ENCODE measurements at regions of chr11 and their contacts with region 1.

Region 1: DNA sequence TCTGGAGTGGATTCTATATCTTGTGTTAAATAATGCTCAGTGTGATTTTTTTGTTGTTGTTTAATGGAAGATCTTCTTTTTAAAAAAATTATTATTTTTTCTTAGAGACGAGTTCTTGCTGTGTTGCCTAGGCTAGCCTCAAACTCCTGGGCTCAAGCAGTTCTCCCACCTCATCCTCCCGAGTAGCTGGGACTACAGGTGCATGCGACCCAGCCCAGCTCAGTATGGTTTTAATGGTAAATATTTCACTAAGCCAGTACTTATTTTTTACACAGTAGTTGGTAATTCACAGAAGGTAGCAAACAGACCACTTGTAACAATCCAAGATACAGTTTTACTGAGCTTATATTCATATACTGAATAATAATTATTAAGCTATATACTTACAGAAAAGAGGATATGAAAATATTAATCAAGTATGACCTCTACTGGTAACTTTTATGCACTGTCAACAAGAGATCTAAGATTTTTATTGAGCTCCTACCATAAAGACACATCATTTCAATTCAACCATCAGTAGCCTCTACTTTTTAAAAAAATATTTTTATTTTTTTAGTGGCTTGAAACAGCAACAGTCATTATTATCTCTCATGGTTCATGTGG is 6.1 kb upstream of the CD59 start:
- DNase-seq: no peak
- ATAC-seq: peak; percentile 63
- H3K4me3 ChIP-seq: no peak overlapping the region
- H3K27ac ChIP-seq: no peak overlapping the region
- H3K4me1 ChIP-seq: peaks cover 0 to 4% of the 10 kb centered on the region in 2 experiments; a peak in 2 of 4 replicates
- H3K27me3 ChIP-seq: no peaks in the 10 kb centered on the region
- CTCF ChIP-seq: peak; percentile 26 to 56 (median 42); a peak in 3 of 6 replicates
- POLR2A ChIP-seq: no peak
- RAD21 ChIP-seq: peak; percentile 70; the same call in 1 of the 2 replicates

Region 2: GRCh38 chr11:33161120-33162005 is 581.0 kb before region 1 on chr11 and contains the start of gene CSTF3:
- CTCF ChIA-PET with region 1: interaction called, 14 read pairs
- POLR2A ChIA-PET with region 1: no interaction called
- RAD21 ChIA-PET with region 1: no interaction called
- intact Hi-C with region 1: no loop called
- DNase-seq: peak; percentile 97
- ATAC-seq: peak; percentile 97
- H3K4me3 ChIP-seq: peak within 1 kb of the TSS; percentile 70 to 85
- H3K27ac ChIP-seq: peak within 1 kb of the TSS; percentile 76
- H3K4me1 ChIP-seq: peaks cover 6 to 27% of the 10 kb centered on the region in 2 experiments; a peak in 3 of 4 replicates
- H3K27me3 ChIP-seq: no peaks in the 10 kb centered on the region
- CTCF ChIP-seq: peak in 2 of 3 experiments; percentile 11 to 20; a peak in 1 of 6 replicates
- POLR2A ChIP-seq: peak; percentile 45
- RAD21 ChIP-seq: no peak
- total RNA-seq, gene CSTF3: 39.3 TPM

Region 3: GRCh38 chr11:33542921-33543320 is 199.4 kb before region 1 on chr11:
- CTCF ChIA-PET with region 1: interaction called, 11 read pairs
- POLR2A ChIA-PET with region 1: no interaction called
- RAD21 ChIA-PET with region 1: interaction called in 1 of 2 experiments, 3 read pairs
- intact Hi-C with region 1: loop called (anchors 5 kb)
- DNase-seq: peak; percentile 22
- ATAC-seq: peak; percentile 94
- H3K4me3 ChIP-seq: no peak overlapping the region
- H3K27ac ChIP-seq: no peak overlapping the region
- H3K4me1 ChIP-seq: peaks cover 0 to 5% of the 10 kb centered on the region in 2 experiments; a peak in 1 of 4 replicates
- H3K27me3 ChIP-seq: no peaks in the 10 kb centered on the region
- CTCF ChIP-seq: peak; percentile 67 to 87 (median 80); a peak in 5 of 6 replicates
- POLR2A ChIP-seq: no peak
- RAD21 ChIP-seq: peak; percentile 76

Region 4: DNA sequence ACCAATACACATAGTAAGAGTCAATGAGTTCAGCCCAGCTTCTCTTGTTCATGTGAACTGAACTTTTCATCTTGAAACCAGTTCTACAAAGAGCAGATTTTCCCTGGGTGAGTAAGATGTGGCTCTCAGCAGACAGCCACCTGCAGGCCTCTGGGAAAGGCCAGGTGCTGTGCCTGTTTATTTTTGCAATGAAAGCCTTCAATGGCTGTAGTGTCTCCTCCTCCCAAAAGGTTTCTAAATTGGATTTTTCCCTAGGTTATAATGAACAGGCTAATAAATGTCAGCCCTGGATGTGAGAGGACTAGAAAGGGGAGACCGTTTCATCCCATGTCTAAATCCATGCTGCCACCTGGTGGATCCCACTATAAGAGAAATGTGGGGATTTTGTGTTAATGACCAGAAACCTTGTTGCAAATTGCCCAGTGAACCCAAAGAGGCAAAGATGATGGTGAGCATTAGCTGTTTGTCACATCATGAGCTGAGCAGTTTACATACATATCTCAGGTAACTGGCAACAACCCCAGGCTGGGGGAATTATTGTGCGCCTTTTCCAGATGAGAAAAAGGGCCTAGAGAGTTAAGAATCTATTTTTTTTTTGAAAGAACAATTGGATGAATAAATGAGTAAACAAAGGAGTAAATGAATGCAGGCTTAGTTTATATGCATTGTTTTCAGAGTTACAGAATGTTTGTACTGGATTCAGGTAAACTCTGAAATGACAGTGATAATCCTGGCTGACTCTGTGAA is 54.4 kb before region 1 on chr11:
- CTCF ChIA-PET with region 1: interaction called, 57 read pairs
- POLR2A ChIA-PET with region 1: interaction called, 7 read pairs
- RAD21 ChIA-PET with region 1: interaction called in 1 of 2 experiments, 11 read pairs
- intact Hi-C with region 1: no loop called
- DNase-seq: peak; percentile 60
- ATAC-seq: peak; percentile 43
- H3K4me3 ChIP-seq: no peak overlapping the region
- H3K27ac ChIP-seq: no peak overlapping the region
- H3K4me1 ChIP-seq: peaks cover 29 to 56% of the 10 kb centered on the region in 2 experiments
- H3K27me3 ChIP-seq: no peaks in the 10 kb centered on the region
- CTCF ChIP-seq: peak; percentile 70 to 90 (median 88); a peak in 5 of 6 replicates
- POLR2A ChIP-seq: no peak
- RAD21 ChIP-seq: peak; percentile 98

Region 5: GRCh38 chr11:33700425-33701271 is 41.7 kb before region 1 on chr11 and contains the start of gene C11orf91:
- CTCF ChIA-PET with region 1: interaction called, 16 read pairs
- POLR2A ChIA-PET with region 1: interaction called, 11 read pairs
- RAD21 ChIA-PET with region 1: interaction called in 1 of 2 experiments, 3 read pairs
- intact Hi-C with region 1: loop called (anchors 5 kb)
- DNase-seq: peak; percentile 76
- ATAC-seq: peak; percentile 93
- H3K4me3 ChIP-seq: peak within 1 kb of the TSS; percentile 44 to 52
- H3K27ac ChIP-seq: peak within 1 kb of the TSS; percentile 23; the same call in 1 of the 2 replicates
- H3K4me1 ChIP-seq: peaks cover 10 to 71% of the 10 kb centered on the region in 2 experiments
- H3K27me3 ChIP-seq: no peaks in the 10 kb centered on the region
- CTCF ChIP-seq: no peak
- POLR2A ChIP-seq: no peak
- RAD21 ChIP-seq: no peak
- total RNA-seq, gene C11orf91: 0.54 TPM

Region 6: DNA sequence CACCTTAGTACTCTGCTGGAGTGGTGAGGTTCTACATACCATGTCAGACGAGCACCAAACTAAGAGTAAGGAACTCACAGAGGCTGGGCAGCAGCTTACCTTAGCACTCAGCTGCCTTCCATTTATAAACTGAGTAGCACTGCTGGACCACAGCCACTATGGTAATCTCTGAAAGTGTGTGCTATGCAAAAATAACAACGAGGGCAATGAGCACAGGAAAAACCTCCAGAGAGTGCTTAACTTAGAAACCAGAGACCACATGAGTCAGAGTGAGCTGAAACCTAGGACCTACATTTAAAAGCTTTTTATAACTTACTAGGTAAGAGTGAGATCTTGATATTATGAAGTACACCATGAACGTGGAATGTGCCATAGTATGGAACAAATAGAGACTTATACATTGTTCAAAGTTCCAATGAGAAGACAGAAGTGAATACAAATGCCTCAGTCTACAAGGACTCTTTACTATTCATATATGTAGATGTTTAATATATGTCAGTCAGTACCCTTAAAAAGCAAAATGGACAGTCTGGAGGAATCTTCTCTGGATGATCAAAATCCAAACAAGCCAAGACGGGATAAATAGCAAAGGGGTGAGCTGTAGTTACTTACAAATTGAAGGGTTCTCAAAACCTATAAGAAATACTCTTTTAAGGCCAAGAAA is 11.1 kb after region 1 on chr11:
- CTCF ChIA-PET with region 1: interaction called, 16 read pairs
- POLR2A ChIA-PET with region 1: no interaction called
- RAD21 ChIA-PET with region 1: no interaction called
- intact Hi-C with region 1: no loop called
- DNase-seq: no peak
- ATAC-seq: no peak
- H3K4me3 ChIP-seq: no peak overlapping the region
- H3K27ac ChIP-seq: no peak overlapping the region
- H3K4me1 ChIP-seq: no peaks in the 10 kb centered on the region
- H3K27me3 ChIP-seq: no peaks in the 10 kb centered on the region
- CTCF ChIP-seq: no peak
- POLR2A ChIP-seq: no peak
- RAD21 ChIP-seq: no peak

Region 7: GRCh38 chr11:33802414-33802950 is 60.1 kb after region 1 on chr11:
- CTCF ChIA-PET with region 1: interaction called, 11 read pairs
- POLR2A ChIA-PET with region 1: no interaction called
- RAD21 ChIA-PET with region 1: no interaction called
- intact Hi-C with region 1: no loop called
- DNase-seq: peak; percentile 85
- ATAC-seq: peak; percentile 96
- H3K4me3 ChIP-seq: peak overlapping the region; percentile 37 to 55
- H3K27ac ChIP-seq: no peak overlapping the region
- H3K4me1 ChIP-seq: peaks cover 2 to 18% of the 10 kb centered on the region in 2 experiments; a peak in 3 of 4 replicates
- H3K27me3 ChIP-seq: no peaks in the 10 kb centered on the region
- CTCF ChIP-seq: no peak
- POLR2A ChIP-seq: no peak
- RAD21 ChIP-seq: no peak; the same call in 1 of the 2 replicates

Measured in HCT116 (cell line).